ENCODE measurements at regions of chr4 and their contacts with region 1.

Region 1: DNA sequence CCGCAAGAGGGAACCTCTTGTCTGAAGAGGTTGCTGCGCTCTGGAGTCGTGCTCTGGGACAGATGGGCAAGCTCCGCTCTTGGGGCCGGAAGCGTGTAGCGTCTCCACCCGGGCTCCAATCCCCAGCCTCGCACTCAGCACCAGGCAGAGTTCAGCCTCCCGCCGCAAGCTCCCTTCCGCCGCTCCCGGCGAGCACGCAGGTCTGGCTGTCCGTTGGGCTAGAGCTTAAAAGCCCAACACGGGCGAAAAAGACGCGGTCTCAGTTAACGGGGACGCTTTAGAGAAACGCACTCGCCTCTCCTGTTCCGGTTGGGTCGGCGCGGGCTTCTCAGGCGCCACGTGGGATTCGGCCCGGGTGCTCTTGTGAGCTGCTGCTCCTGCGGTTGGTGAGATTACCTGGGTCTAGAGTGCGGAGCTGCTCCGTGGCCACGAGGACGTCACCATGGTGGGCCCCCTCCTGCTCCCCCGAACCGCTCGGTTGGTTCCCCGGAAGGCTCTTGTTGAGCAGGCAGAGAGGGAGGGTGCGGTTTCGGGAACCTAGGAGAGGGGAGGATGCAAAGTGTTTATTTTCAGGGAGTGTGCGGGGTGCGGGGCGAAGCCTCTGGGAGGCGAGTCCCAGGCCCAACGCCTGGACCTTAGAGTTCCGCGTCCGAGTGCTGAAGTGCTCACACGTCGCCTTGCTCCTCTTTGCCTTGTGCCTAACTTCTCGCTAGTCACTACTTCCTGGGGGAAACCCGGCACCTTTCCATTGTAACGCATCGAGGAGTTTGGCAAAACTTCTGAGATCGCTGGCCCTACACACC is at the start of gene TMA16:
- DNase-seq: peak; percentile 95
- ATAC-seq: peak; percentile 97
- H3K4me3 ChIP-seq: peak within 1 kb of the TSS; percentile 79
- H3K27ac ChIP-seq: peak within 1 kb of the TSS; percentile 77
- H3K4me1 ChIP-seq: no peaks in the 10 kb centered on the region
- H3K27me3 ChIP-seq: no peaks in the 10 kb centered on the region
- CTCF ChIP-seq: no peak
- POLR2A ChIP-seq: peak; percentile 87
- RAD21 ChIP-seq: no peak
- total RNA-seq, gene TMA16: 9.3 and 42.5 TPM in 2 replicates

Region 2: GRCh38 chr4:162972661-162973330 is 521.8 kb before region 1 on chr4:
- CTCF ChIA-PET with region 1: no interaction called
- POLR2A ChIA-PET with region 1: no interaction called
- dilution Hi-C with region 1: no loop called
- in situ Hi-C with region 1: no loop called
- intact Hi-C with region 1: no loop called
- DNase-seq: no peak
- ATAC-seq: no peak
- H3K4me3 ChIP-seq: no peak overlapping the region
- H3K27ac ChIP-seq: no peak overlapping the region
- H3K4me1 ChIP-seq: no peaks in the 10 kb centered on the region
- H3K27me3 ChIP-seq: no peaks in the 10 kb centered on the region
- CTCF ChIP-seq: no peak
- POLR2A ChIP-seq: no peak
- RAD21 ChIP-seq: no peak

Region 3: GRCh38 chr4:163534056-163534455 is 39.5 kb after region 1 on chr4:
- CTCF ChIA-PET with region 1: no interaction called
- POLR2A ChIA-PET with region 1: interaction called, 3 read pairs
- dilution Hi-C with region 1: no loop called
- in situ Hi-C with region 1: loop called (anchors 5 kb)
- intact Hi-C with region 1: no loop called
- DNase-seq: no peak
- ATAC-seq: no peak
- H3K4me3 ChIP-seq: no peak overlapping the region
- H3K27ac ChIP-seq: no peak overlapping the region
- H3K4me1 ChIP-seq: no peaks in the 10 kb centered on the region; the same call in 1 of the 2 replicates
- H3K27me3 ChIP-seq: no peaks in the 10 kb centered on the region
- CTCF ChIP-seq: no peak
- POLR2A ChIP-seq: no peak
- RAD21 ChIP-seq: no peak

Region 4: DNA sequence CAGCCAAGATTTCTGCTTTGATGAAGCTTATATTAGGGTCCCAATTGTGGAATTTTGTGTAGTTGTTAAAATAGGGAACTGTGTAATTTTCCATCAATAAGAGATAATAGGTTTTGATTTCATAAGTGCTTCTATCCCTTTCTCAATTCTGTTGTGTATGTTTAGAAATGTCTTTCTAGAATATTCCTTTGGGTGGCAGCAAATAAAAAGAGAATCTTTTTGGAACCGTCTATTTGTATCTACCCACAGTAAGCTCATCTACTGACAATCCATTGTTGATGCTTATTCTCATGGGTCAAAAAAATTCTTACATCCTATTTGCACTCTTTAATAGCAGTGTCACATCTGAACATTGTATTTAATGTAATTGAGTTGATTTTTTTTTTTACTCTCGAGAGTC is 61.6 kb after region 1 on chr4:
- CTCF ChIA-PET with region 1: no interaction called
- POLR2A ChIA-PET with region 1: no interaction called
- dilution Hi-C with region 1: no loop called
- in situ Hi-C with region 1: no loop called
- intact Hi-C with region 1: no loop called
- DNase-seq: peak; percentile 10
- ATAC-seq: no peak
- H3K4me3 ChIP-seq: no peak overlapping the region
- H3K27ac ChIP-seq: no peak overlapping the region
- H3K4me1 ChIP-seq: no peaks in the 10 kb centered on the region
- H3K27me3 ChIP-seq: peaks cover 2% of the 10 kb centered on the region; the same call in 1 of the 2 replicates
- CTCF ChIP-seq: peak; percentile 34
- POLR2A ChIP-seq: no peak
- RAD21 ChIP-seq: 0 out of 2 replicates have a peak, but pooled peaks have one; percentile 32

Measured in IMR-90 (cell line).